ENCODE measurements at regions of chr11 and their contacts with region 1.

Region 1: GRCh38 chr11:93784152-93784934 is at the start of gene MED17:
- DNase-seq: peak; percentile 88
- ATAC-seq: peak; percentile 99
- H3K4me3 ChIP-seq: peak within 1 kb of the TSS; percentile 73 to 98 (median 91)
- H3K27ac ChIP-seq: peak within 1 kb of the TSS; percentile 91 to 94 (median 94)
- H3K4me1 ChIP-seq: peaks cover 27 to 35% of the 10 kb centered on the region in 2 donors
- H3K27me3 ChIP-seq: no peaks in the 10 kb centered on the region
- CTCF ChIP-seq: peak in 4 of 5 experiments; percentile 38 to 53 (median 44)
- POLR2A ChIP-seq: peak; percentile 79
- total RNA-seq, gene MED17: 12.3 to 14.0 (median 13.4) TPM

Region 2: GRCh38 chr11:93444617-93445073 is 339.7 kb before region 1 on chr11:
- in situ Hi-C with region 1: no loop called
- intact Hi-C with region 1: no loop called
- DNase-seq: no peak
- ATAC-seq: no peak
- H3K4me3 ChIP-seq: no peak overlapping the region
- H3K27ac ChIP-seq: no peak overlapping the region
- H3K4me1 ChIP-seq: no peaks in the 10 kb centered on the region
- H3K27me3 ChIP-seq: no peaks in the 10 kb centered on the region
- CTCF ChIP-seq: no peak
- POLR2A ChIP-seq: no peak

Region 3: DNA sequence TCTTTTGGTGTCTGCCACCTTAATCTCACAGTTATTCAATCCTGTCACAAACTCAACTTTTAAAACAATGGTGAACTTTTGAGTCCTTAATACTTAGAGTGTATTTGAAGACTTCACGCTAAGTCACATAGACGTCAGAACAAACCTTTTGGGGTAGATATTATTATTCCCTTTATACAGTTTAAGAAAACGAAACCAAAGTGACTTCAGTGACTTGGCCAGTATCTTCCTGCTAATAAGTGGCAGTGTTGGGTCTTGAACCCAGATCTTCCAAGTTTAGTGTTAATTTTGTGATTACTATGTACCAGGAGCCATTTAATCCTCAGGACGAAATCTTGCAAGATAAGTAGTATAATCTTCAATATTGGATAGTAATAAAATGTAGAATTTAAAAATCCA is 122.2 kb before region 1 on chr11:
- in situ Hi-C with region 1: no loop called
- intact Hi-C with region 1: loop called (anchors 5 kb)
- DNase-seq: no peak
- ATAC-seq: no peak
- H3K4me3 ChIP-seq: peak overlapping the region; percentile 76 to 90 (median 81)
- H3K27ac ChIP-seq: peak overlapping the region; percentile 77 to 87 (median 81)
- H3K4me1 ChIP-seq: peaks cover 8 to 13% of the 10 kb centered on the region in 2 donors
- H3K27me3 ChIP-seq: no peaks in the 10 kb centered on the region
- CTCF ChIP-seq: no peak
- POLR2A ChIP-seq: no peak

Region 4: GRCh38 chr11:93796441-93797231 is 12.3 kb after region 1 on chr11:
- in situ Hi-C with region 1: no loop called
- intact Hi-C with region 1: no loop called
- DNase-seq: no peak
- ATAC-seq: no peak
- H3K4me3 ChIP-seq: no peak overlapping the region
- H3K27ac ChIP-seq: no peak overlapping the region
- H3K4me1 ChIP-seq: no peaks in the 10 kb centered on the region
- H3K27me3 ChIP-seq: no peaks in the 10 kb centered on the region
- CTCF ChIP-seq: no peak
- POLR2A ChIP-seq: no peak

Region 5: GRCh38 chr11:94493281-94494125 is 709.2 kb after region 1 on chr11 and contains the starts of genes ANKRD49 and MRE11:
- in situ Hi-C with region 1: loop called in 2 of 4 experiments (anchors 25 kb)
- intact Hi-C with region 1: no loop called
- DNase-seq: peak; percentile 96 to 98
- ATAC-seq: peak; percentile 100
- H3K4me3 ChIP-seq: peak within 1 kb of the TSS; percentile 80 to 94 (median 86)
- H3K27ac ChIP-seq: peak within 1 kb of the TSS; percentile 76 to 87 (median 82)
- H3K4me1 ChIP-seq: peaks cover 24 to 27% of the 10 kb centered on the region in 2 donors
- H3K27me3 ChIP-seq: no peaks in the 10 kb centered on the region
- CTCF ChIP-seq: no peak
- POLR2A ChIP-seq: peak; percentile 53 to 74
- total RNA-seq, gene ANKRD49: 9.0 to 21.1 (median 11.9) TPM
- total RNA-seq, gene MRE11: 5.3 to 12.3 (median 5.9) TPM